SK-N-SH (cell line): ENCODE measurements at regions of chr17 and their contacts with region 1.

Region 1: GRCh38 chr17:1365445-1366039 is 34.5 kb downstream of the YWHAE start:
- DNase-seq: peak; percentile 75
- H3K4me3 ChIP-seq: peak overlapping the region in 1 of 2 experiments; percentile 29; a peak in 1 of 4 replicates
- H3K27ac ChIP-seq: peak overlapping the region in 1 of 2 experiments; percentile 48; a peak in 2 of 4 replicates
- H3K4me1 ChIP-seq: peaks cover 2 to 27% of the 10 kb centered on the region in 2 experiments; a peak in 2 of 4 replicates
- H3K27me3 ChIP-seq: no peaks in the 10 kb centered on the region
- CTCF ChIP-seq: peak; percentile 94
- EP300 ChIP-seq: no peak
- RAD21 ChIP-seq: peak; percentile 85

Region 2: GRCh38 chr17:1340371-1340770 is 25.2 kb before region 1 on chr17:
- CTCF ChIA-PET with region 1: interaction called, 25 read pairs
- POLR2A ChIA-PET with region 1: no interaction called
- DNase-seq: no peak
- H3K4me3 ChIP-seq: no peak overlapping the region
- H3K27ac ChIP-seq: no peak overlapping the region
- H3K4me1 ChIP-seq: no peaks in the 10 kb centered on the region
- H3K27me3 ChIP-seq: no peaks in the 10 kb centered on the region
- CTCF ChIP-seq: no peak
- EP300 ChIP-seq: no peak
- RAD21 ChIP-seq: no peak

Region 3: DNA sequence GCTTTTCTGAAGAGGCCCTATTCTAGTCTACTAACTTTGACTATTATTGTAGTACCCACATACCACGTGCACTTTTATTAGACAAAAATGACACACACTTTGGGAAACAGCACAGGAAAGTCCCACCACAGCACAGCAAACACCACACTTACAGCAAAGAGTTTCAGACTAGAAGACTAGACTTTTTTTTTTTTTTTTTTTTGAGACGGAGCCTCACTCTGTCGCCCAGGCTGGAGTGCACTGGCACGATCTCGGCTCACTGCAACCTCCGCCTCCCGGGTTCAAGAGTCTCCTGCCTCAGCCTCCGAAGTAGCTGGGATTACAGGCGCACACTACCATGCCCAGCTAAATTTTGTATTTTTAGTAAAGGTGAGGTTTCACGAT is 14.4 kb after region 1 on chr17:
- CTCF ChIA-PET with region 1: interaction called, 93 read pairs
- POLR2A ChIA-PET with region 1: no interaction called
- DNase-seq: no peak
- H3K4me3 ChIP-seq: no peak overlapping the region
- H3K27ac ChIP-seq: no peak overlapping the region
- H3K4me1 ChIP-seq: peaks cover 4 to 41% of the 10 kb centered on the region in 2 experiments; a peak in 2 of 4 replicates
- H3K27me3 ChIP-seq: no peaks in the 10 kb centered on the region
- CTCF ChIP-seq: no peak
- EP300 ChIP-seq: no peak
- RAD21 ChIP-seq: no peak

Region 4: GRCh38 chr17:1390433-1391367 is 25.2 kb after region 1 on chr17:
- CTCF ChIA-PET with region 1: interaction called, 57 read pairs
- POLR2A ChIA-PET with region 1: no interaction called
- DNase-seq: no peak
- H3K4me3 ChIP-seq: no peak overlapping the region
- H3K27ac ChIP-seq: peak overlapping the region in 1 of 2 experiments; percentile 1; a peak in 1 of 4 replicates
- H3K4me1 ChIP-seq: peaks cover 6 to 31% of the 10 kb centered on the region in 2 experiments; a peak in 3 of 4 replicates
- H3K27me3 ChIP-seq: no peaks in the 10 kb centered on the region
- CTCF ChIP-seq: no peak
- EP300 ChIP-seq: 0 out of 4 replicates have a peak, but pooled peaks of 1 of the 2 experiments have one; percentile 9
- RAD21 ChIP-seq: no peak

Region 5: GRCh38 chr17:1488030-1488863 is 122.7 kb after region 1 on chr17:
- CTCF ChIA-PET with region 1: interaction called, 16 read pairs
- POLR2A ChIA-PET with region 1: no interaction called
- DNase-seq: peak; percentile 94
- H3K4me3 ChIP-seq: peak overlapping the region; percentile 44 to 51
- H3K27ac ChIP-seq: peak overlapping the region; percentile 81 to 85
- H3K4me1 ChIP-seq: peaks cover 24 to 40% of the 10 kb centered on the region in 2 experiments; a peak in 2 of 4 replicates
- H3K27me3 ChIP-seq: no peaks in the 10 kb centered on the region
- CTCF ChIP-seq: no peak
- EP300 ChIP-seq: peak in 1 of 2 experiments; percentile 31; a peak in 1 of 4 replicates
- RAD21 ChIP-seq: no peak

Region 6: GRCh38 chr17:2094891-2095535 is 729.5 kb after region 1 on chr17:
- CTCF ChIA-PET with region 1: no interaction called
- POLR2A ChIA-PET with region 1: no interaction called
- DNase-seq: peak; percentile 37
- H3K4me3 ChIP-seq: no peak overlapping the region
- H3K27ac ChIP-seq: peak overlapping the region in 1 of 2 experiments; percentile 29; a peak in 1 of 4 replicates
- H3K4me1 ChIP-seq: peaks cover 13 to 19% of the 10 kb centered on the region in 2 experiments; a peak in 3 of 4 replicates
- H3K27me3 ChIP-seq: no peaks in the 10 kb centered on the region
- CTCF ChIP-seq: peak; percentile 55
- EP300 ChIP-seq: no peak
- RAD21 ChIP-seq: peak; percentile 72